ENCODE measurements at regions of chr4 and their contacts with region 1.

Region 1: DNA sequence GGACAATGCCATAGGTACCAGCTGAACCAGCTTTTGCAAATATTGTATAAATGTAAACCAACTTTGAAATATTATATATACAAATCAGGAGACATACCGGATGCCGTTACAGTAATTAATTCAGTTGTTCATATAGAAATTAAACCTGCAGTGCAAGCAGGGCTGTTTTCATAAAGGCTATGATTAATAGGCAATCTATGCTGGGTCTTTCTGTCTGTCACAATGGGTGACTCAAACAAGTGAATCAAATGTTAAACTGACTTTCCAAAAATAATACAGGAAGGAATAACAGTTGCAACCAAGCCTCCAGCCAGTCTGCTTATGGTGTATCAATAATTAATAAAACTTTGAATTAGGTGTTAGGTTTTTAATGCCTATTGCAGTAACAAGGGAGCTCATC is 43.9 kb downstream of the GABRB1 start:
- DNase-seq: no peak
- H3K4me3 ChIP-seq: no peak overlapping the region
- H3K27ac ChIP-seq: no peak overlapping the region
- H3K4me1 ChIP-seq: no peaks in the 10 kb centered on the region
- H3K27me3 ChIP-seq: no peaks in the 10 kb centered on the region
- CTCF ChIP-seq: no peak
- EP300 ChIP-seq: no peak
- POLR2A ChIP-seq: no peak

Region 2: GRCh38 chr4:46856333-46856732 is 218.9 kb before region 1 on chr4:
- intact Hi-C with region 1: no loop called
- DNase-seq: no peak
- H3K4me3 ChIP-seq: no peak overlapping the region
- H3K27ac ChIP-seq: no peak overlapping the region
- H3K4me1 ChIP-seq: no peaks in the 10 kb centered on the region
- H3K27me3 ChIP-seq: no peaks in the 10 kb centered on the region
- CTCF ChIP-seq: no peak
- EP300 ChIP-seq: no peak
- POLR2A ChIP-seq: no peak

Region 3: DNA sequence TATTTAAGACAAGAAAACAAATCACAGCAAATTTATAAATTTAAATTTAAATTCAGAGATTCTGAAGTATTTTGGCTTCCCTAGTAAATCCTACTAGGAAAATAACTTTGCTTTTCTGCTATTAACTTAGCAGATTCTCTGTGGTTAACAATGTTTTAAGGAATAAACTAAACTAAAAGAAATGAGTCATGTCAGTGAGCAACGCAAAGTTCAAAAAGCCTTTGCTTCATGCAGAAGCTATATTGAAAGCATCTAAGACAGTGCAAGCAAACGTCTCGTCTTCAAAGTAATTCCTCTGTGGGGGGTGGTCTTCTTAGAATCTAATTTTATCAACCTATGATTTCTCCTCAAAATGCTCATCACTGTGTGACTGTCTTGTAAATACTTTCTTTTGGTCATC is 13.8 kb before region 1 on chr4:
- intact Hi-C with region 1: loop called (anchors 1 kb)
- DNase-seq: no peak
- H3K4me3 ChIP-seq: no peak overlapping the region
- H3K27ac ChIP-seq: no peak overlapping the region
- H3K4me1 ChIP-seq: no peaks in the 10 kb centered on the region
- H3K27me3 ChIP-seq: no peaks in the 10 kb centered on the region
- CTCF ChIP-seq: no peak
- EP300 ChIP-seq: no peak
- POLR2A ChIP-seq: no peak